Posterior vena cava (tissue), 2 donors: ENCODE measurements at regions of chr4 and their contacts with region 1.

Region 1: GRCh38 chr4:85147439-85148076 is 181.1 kb upstream of the WDFY3 start:
- DNase-seq: no peak

Region 2: GRCh38 chr4:85180533-85180932 is 33.0 kb after region 1 on chr4:
- intact Hi-C with region 1: no loop called
- DNase-seq: no peak

Region 3: DNA sequence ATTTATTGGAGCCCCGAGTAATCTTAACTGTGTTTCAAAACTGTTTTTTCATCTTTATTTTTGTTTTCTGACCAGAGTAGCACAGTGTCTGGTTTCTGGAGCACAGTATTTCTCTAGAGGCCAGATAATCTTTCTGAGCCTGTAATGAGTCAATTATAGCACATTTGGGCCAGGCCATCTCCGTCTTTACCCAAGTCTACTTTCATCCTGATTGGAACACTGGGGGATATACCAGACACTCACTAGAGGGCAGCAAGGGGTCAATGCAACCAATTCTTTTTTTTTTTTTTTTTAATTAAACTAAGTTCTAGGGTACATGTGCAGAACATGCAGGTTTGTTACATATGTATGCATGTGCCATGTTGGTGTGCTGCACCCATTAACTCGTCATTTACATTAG is 609.4 kb after region 1 on chr4:
- intact Hi-C with region 1: loop called in 1 of 2 experiments (anchors 10 kb)
- DNase-seq: no peak